ENCODE measurements at regions of chr1 and their contacts with region 1.

Region 1: DNA sequence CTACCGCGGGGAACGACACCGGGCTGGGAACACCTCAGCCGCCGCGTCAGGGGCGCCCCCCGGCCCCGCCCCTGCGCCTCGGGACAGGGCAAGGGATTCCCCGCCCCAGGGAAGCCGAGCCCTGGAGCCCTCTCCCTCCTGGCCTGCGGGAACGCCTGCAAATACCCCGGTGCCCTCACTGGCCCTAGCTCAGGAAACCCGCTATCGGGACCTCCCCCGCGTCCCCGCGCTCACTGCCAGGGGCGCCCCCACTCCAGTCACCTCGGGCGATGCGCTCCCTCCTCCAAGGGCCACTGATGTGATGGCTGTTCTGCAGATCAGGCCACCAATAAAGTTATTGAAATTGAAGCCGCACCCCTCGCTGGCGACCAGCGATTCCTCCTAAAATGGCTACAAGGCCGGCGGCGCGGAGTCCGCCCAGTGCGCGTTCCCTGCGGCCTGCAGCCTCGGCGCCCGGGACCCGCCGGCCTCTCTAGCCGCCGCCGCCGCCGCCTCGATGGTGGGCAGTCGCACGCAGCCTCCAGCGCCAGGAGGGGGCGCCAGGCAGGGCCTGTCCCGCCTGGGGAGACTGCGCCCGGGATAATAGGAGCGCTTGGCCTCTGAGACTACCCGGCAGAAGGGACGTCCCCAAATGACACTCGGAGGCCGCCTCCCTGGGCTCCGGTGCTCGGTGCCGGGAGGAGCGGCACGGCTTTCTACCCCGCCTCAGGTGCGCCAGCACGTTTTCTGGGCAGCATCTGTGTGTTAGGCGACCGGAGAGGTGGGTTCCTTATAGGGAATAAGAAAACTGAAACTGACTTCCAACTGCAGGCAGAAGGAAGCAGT is at the start of gene PRKAB2:
- DNase-seq: peak; percentile 97
- H3K4me3 ChIP-seq: peak within 1 kb of the TSS; percentile 69 to 91 (median 84)
- H3K27ac ChIP-seq: peak within 1 kb of the TSS; percentile 93 to 98 (median 96)
- H3K4me1 ChIP-seq: peaks cover 0 to 51% (median 38%) of the 10 kb centered on the region in 4 donors
- H3K27me3 ChIP-seq: no peaks in the 10 kb centered on the region
- CTCF ChIP-seq: peak; percentile 77 to 98 (median 86)
- EP300 ChIP-seq: no peak
- POLR2A ChIP-seq: peak; percentile 77
- total RNA-seq, gene PRKAB2: 20.9 to 45.6 (median 27.3) TPM

Region 2: DNA sequence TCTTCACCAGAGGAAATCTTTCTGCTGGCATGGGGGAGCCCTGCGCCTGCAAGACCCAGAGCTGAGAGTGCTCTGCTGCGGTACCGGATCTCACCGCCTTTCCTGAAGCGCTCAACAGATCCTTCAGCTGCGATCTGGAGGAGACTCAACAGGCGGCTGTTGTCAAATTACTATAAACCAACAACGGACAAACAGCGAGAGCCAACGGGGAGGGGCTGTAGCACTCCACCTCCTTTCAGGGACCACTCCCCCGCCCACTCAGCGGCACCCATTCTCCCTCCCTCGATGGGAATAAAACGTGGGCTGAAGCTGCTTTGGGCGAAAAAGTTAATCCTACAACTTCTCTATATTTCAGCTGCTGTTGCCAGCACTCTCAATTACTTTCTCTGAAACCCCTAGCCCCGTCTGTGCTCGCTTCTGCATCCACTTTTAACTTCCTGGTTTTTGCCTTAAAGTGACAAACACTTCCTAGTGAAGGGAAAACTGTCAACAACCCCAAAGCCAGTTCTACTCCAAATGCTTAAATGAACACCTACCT is 52.9 kb after region 1 on chr1 and contains the start of gene FMO5:
- in situ Hi-C with region 1: loop called in 1 of 4 experiments (anchors 10 kb)
- intact Hi-C with region 1: no loop called
- DNase-seq: peak; percentile 77
- H3K4me3 ChIP-seq: peak within 1 kb of the TSS; percentile 49 to 70 (median 64)
- H3K27ac ChIP-seq: peak within 1 kb of the TSS; percentile 83 to 90 (median 88)
- H3K4me1 ChIP-seq: peaks cover 0 to 20% (median 3%) of the 10 kb centered on the region in 4 donors
- H3K27me3 ChIP-seq: no peaks in the 10 kb centered on the region
- CTCF ChIP-seq: peak; percentile 20 to 72 (median 41)
- EP300 ChIP-seq: no peak
- POLR2A ChIP-seq: peak; percentile 47
- total RNA-seq, gene FMO5: 57.6 to 145 (median 62.6) TPM

Region 3: DNA sequence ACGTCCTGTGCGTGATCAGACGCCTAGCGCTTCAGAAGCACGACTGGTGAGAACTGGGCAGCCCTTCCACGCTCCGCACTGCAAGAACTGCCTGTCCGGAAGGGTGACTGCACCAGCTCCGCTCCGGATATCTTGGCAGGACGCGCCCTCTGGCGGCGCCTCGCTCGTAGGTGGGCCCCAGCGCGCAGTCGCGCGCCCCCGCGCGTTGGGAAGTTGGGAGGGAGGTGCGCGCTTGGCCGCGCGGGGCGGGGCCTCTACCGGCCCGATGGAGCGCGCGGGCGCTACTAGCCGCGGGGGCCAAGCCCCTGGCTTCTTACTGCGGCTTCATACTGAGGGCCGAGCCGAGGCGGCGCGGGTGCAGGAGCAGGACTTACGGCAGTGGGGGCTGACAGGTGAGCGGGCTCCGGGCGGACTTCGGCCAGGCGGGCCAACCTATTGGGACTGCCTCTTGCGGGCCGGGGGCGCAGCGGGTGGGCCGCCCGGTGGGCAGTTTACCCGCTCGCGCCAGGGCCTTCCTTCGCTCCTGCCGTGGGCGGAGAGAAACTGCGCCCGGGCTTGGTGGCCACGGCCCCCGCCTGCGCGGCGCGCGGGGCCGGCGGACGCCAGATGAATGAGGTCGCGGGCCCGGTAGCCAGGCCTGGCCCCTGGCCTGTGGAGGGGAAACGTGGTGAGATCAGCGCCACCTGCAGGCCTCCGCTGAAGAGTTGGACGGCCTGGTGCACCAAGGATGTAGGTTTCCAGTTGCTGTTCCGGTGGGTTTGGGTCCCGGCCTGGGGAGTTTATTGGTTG is 70.3 kb after region 1 on chr1 and contains the start of gene CHD1L:
- in situ Hi-C with region 1: loop called (anchors 5 to 10 kb)
- intact Hi-C with region 1: loop called (anchors 2 kb)
- DNase-seq: peak; percentile 96
- H3K4me3 ChIP-seq: peak within 1 kb of the TSS; percentile 81 to 99 (median 95)
- H3K27ac ChIP-seq: peak within 1 kb of the TSS; percentile 91 to 99 (median 98)
- H3K4me1 ChIP-seq: peaks cover 6 to 49% (median 23%) of the 10 kb centered on the region in 4 donors
- H3K27me3 ChIP-seq: no peaks in the 10 kb centered on the region
- CTCF ChIP-seq: peak; percentile 62 to 97 (median 83)
- EP300 ChIP-seq: no peak
- POLR2A ChIP-seq: peak; percentile 48
- total RNA-seq, gene CHD1L: 27.1 to 32.9 (median 30.1) TPM

Region 4: GRCh38 chr1:147292631-147293251 is 120.4 kb after region 1 on chr1:
- in situ Hi-C with region 1: no loop called
- intact Hi-C with region 1: no loop called
- DNase-seq: no peak
- H3K4me3 ChIP-seq: no peak overlapping the region
- H3K27ac ChIP-seq: no peak overlapping the region
- H3K4me1 ChIP-seq: peaks cover 0 to 3% (median 0%) of the 10 kb centered on the region in 4 donors
- H3K27me3 ChIP-seq: no peaks in the 10 kb centered on the region
- CTCF ChIP-seq: no peak
- EP300 ChIP-seq: no peak
- POLR2A ChIP-seq: no peak

Measured in transverse colon (tissue), 4 donors.